ENCODE measurements at regions of chr10 and their contacts with region 1.

Region 1: GRCh38 chr10:30999070-30999712 is 32.5 kb downstream of the ZNF438 start:
- DNase-seq: peak; percentile 14
- H3K4me3 Mint-ChIP-seq: peak overlapping the region; percentile 22
- H3K27ac Mint-ChIP-seq: no peak overlapping the region
- H3K4me1 Mint-ChIP-seq: peaks cover 25% of the 10 kb centered on the region
- H3K27me3 Mint-ChIP-seq: no peaks in the 10 kb centered on the region

Region 2: GRCh38 chr10:30963992-30964930 is 34.9 kb before region 1 on chr10:
- CTCF ChIA-PET with region 1: no interaction called
- intact Hi-C with region 1: loop called (anchors 1 kb)
- DNase-seq: peak; percentile 12
- H3K4me3 Mint-ChIP-seq: no peak overlapping the region
- H3K27ac Mint-ChIP-seq: peak overlapping the region; percentile 57
- H3K4me1 Mint-ChIP-seq: peaks cover 16% of the 10 kb centered on the region
- H3K27me3 Mint-ChIP-seq: no peaks in the 10 kb centered on the region

Region 3: DNA sequence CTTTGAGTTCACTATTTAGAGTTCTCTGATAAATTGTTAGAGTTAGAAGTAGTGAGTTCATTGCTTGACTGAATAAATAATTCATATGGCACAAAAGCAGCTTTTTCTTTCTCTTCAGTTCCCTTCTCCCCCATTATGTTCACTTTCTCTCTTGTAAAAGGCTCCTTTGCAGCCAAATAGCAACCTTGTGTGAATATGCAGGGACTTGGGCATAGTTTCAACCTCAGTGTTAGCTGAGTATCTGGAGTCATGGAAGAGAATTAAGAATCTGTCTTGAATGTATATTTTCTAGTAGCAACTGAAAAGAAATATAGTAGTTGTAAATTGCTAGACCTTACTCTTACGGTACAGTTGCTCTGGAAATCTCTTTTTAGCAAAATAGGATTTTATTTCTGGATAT is 351.7 kb after region 1 on chr10:
- CTCF ChIA-PET with region 1: no interaction called
- intact Hi-C with region 1: no loop called
- DNase-seq: no peak
- H3K4me3 Mint-ChIP-seq: no peak overlapping the region
- H3K27ac Mint-ChIP-seq: no peak overlapping the region
- H3K4me1 Mint-ChIP-seq: peaks cover 72% of the 10 kb centered on the region
- H3K27me3 Mint-ChIP-seq: no peaks in the 10 kb centered on the region

Measured in activated naive CD4-positive, alpha-beta T cell treated with anti-CD3 and anti-CD28 coated beads for 36 hours (primary cell).